A673 (cell line): ENCODE measurements at regions of chr20 and their contacts with region 1.

Region 1: DNA sequence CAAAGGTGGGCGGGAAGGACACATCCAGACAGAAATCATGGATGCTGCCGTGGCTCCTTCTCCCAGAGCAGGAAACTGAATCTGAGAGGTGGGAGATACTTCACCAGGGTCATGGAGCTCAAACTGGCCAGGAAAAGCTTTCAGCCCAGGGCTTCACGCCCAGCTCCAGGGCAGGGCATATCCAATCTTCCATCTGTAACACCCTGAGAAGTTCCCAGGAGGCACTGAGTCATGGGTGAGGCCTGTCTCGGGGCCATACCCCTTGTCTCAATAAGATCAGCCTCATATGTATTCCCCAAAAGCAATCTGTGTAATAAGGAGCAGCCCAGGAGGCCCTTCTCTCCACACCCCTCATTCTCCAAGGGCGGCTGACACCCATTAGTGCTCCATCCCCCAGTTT is 439.2 kb upstream of the SULF2 start:
- DNase-seq: no peak
- H3K4me3 ChIP-seq: no peak overlapping the region
- H3K27ac ChIP-seq: no peak overlapping the region
- H3K4me1 ChIP-seq: no peaks in the 10 kb centered on the region
- H3K27me3 ChIP-seq: no peaks in the 10 kb centered on the region
- CTCF ChIP-seq: no peak

Region 2: DNA sequence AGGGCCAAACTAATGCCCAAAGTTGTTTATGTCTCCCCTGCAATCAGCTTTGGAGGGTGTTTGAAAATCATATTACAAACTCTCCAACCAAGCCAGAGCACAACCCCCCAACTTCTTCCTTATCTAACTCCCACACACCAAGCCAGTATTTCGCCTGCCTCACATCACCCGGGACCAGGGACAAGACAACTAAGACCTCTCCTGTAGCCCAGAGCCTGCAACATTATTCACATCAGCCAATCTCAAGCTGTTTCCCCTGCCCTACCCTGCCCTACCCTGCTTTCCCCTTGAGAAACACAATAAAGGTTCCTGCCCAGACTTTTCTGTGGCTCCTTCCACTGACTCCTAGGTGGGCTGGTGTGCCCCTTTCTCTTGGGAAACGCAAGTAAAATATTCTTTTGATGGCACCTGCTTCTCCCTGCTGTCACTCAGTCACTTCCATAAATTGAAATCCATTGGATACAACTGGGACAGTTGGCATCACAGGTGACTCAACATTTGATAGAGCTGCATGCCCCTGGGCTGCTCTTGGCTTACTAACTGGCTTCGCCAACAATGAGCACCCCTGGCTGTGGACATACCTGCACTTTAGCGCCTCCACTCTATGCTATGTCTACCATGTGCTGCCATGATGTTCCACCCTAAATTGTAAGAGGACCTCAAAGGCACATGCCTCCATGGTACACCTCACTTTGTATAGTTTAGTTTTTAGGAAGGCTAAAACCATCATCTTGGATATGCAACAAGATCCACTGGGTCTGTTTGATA is 47.4 kb after region 1 on chr20:
- CTCF ChIA-PET with region 1: no interaction called
- POLR2A ChIA-PET with region 1: no interaction called
- intact Hi-C with region 1: loop called (anchors 5 kb)
- DNase-seq: no peak
- H3K4me3 ChIP-seq: no peak overlapping the region
- H3K27ac ChIP-seq: no peak overlapping the region
- H3K4me1 ChIP-seq: no peaks in the 10 kb centered on the region
- H3K27me3 ChIP-seq: peaks cover 23% of the 10 kb centered on the region
- CTCF ChIP-seq: no peak